ENCODE measurements at regions of chr21 and their contacts with region 1.

Region 1: GRCh38 chr21:14864211-14865021 is 200.4 kb downstream of the NRIP1 start:
- DNase-seq: peak; percentile 79
- H3K4me3 ChIP-seq: no peak overlapping the region
- H3K27ac ChIP-seq: no peak overlapping the region
- H3K4me1 ChIP-seq: no peaks in the 10 kb centered on the region
- H3K27me3 ChIP-seq: no peaks in the 10 kb centered on the region
- CTCF ChIP-seq: peak; percentile 57

Region 2: GRCh38 chr21:15064576-15065391 is 200.4 kb after region 1 on chr21 and contains the start of gene NRIP1:
- intact Hi-C with region 1: loop called (anchors 10 kb)
- DNase-seq: peak; percentile 90
- H3K4me3 ChIP-seq: peak within 1 kb of the TSS; percentile 81
- H3K27ac ChIP-seq: peak within 1 kb of the TSS; percentile 97
- H3K4me1 ChIP-seq: peaks cover 4% of the 10 kb centered on the region
- H3K27me3 ChIP-seq: no peaks in the 10 kb centered on the region
- CTCF ChIP-seq: no peak
- total RNA-seq, gene NRIP1: 49.5 to 89.3 TPM